Dendritic cell treated with granulocyte-macrophage colony-stimulating factor and Interleukin-4, amounts not matched to agents 40 ng/mL and 50 ng/mL, for 4 days (primary cell): ENCODE measurements at regions of chr15 and their contacts with region 1.

Region 1: GRCh38 chr15:45522328-45523160 is at the start of gene SLC30A4:
- H3K4me3 Mint-ChIP-seq: peak within 1 kb of the TSS; percentile 87
- H3K27ac Mint-ChIP-seq: peak within 1 kb of the TSS; percentile 83
- H3K4me1 Mint-ChIP-seq: peaks cover 68% of the 10 kb centered on the region
- H3K27me3 Mint-ChIP-seq: peaks cover 46% of the 10 kb centered on the region

Region 2: GRCh38 chr15:45476410-45476809 is 46.1 kb before region 1 on chr15:
- intact Hi-C with region 1: no loop called
- H3K4me3 Mint-ChIP-seq: no peak overlapping the region
- H3K27ac Mint-ChIP-seq: no peak overlapping the region
- H3K4me1 Mint-ChIP-seq: peaks cover 4% of the 10 kb centered on the region
- H3K27me3 Mint-ChIP-seq: peaks cover 2% of the 10 kb centered on the region

Region 3: DNA sequence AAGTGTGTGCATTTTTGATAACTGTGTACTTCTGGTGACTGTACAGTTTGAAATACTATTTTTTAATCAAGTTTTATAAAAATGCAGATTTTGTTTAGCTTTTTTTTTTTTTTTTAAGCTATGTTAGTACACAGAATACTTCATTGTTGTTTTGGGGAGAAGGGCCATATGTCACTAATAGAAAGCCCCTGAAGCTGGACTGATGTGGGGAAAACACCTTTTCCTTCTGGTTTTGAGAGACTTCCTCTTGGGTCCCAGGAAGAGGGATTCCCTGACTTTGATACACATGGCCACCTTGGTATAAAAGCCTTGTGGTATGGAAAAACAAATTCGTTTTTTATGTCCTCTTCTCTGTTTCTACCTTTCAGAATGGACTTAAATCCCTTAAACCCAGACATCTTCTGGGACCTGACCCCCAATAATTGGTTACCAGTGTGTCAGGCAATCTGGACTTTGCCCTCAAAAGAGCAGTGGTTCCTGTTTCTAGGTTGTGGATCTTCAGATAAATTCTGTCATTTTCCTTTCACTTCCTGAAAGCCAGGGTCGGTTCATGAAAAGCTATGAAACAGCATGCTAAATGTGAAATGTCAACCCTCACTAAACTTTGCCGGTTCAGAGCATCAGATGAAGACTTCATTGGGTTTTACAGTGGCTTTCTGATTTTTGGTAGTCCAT is 33.5 kb after region 1 on chr15:
- intact Hi-C with region 1: loop called (anchors 5 kb)
- H3K4me3 Mint-ChIP-seq: no peak overlapping the region
- H3K27ac Mint-ChIP-seq: peak overlapping the region; percentile 52
- H3K4me1 Mint-ChIP-seq: peaks cover 41% of the 10 kb centered on the region
- H3K27me3 Mint-ChIP-seq: peaks cover 47% of the 10 kb centered on the region

Region 4: GRCh38 chr15:45587095-45587860 is 64.7 kb after region 1 on chr15 and contains the start of gene BLOC1S6:
- intact Hi-C with region 1: loop called (anchors 1 kb)
- H3K4me3 Mint-ChIP-seq: peak within 1 kb of the TSS; percentile 91
- H3K27ac Mint-ChIP-seq: peak within 1 kb of the TSS; percentile 99
- H3K4me1 Mint-ChIP-seq: peaks cover 51% of the 10 kb centered on the region
- H3K27me3 Mint-ChIP-seq: no peaks in the 10 kb centered on the region

Region 5: GRCh38 chr15:45611305-45611704 is 88.8 kb after region 1 on chr15:
- intact Hi-C with region 1: loop called (anchors 2 kb)
- H3K4me3 Mint-ChIP-seq: no peak overlapping the region
- H3K27ac Mint-ChIP-seq: peak overlapping the region; percentile 34
- H3K4me1 Mint-ChIP-seq: peaks cover 38% of the 10 kb centered on the region
- H3K27me3 Mint-ChIP-seq: no peaks in the 10 kb centered on the region